Activated CD4-positive, alpha-beta T cell treated with anti-CD3 and anti-CD28 coated beads for 36 hours (primary cell): ENCODE measurements at regions of chr19 and their contacts with region 1.

Region 1: DNA sequence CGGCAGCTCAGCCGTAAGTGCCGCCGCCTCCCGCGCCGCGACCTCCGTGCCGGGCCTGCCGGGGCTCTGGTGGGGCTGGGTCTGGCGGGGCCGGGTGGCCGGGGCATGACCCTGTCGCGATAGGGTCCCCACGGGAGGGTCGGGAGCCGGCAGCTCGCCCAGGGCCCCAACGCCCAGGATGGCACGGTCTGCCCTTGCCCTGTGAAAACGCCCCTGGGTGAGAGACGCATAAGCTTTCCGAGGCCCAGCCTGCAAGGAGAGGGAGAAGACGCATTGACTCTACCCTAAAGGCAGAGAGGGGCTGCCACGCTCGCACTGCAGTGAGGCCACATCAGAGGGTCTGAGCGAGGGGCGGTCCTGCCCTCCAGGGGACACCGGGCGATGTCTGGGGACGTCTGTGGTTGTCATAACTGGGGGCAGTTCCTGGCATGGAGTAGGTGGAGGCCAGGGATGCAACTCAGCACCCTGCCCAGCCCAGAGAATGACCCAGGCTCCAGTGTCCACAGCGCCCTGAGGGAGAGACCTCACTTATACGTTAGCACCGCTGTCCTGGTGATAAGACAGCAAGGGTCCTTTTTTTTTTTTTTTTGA is 539 bp downstream of the ZNF554 start:
- DNase-seq: peak; percentile 31
- ATAC-seq: no peak
- H3K4me3 Mint-ChIP-seq: peak overlapping the region; percentile 78
- H3K27ac Mint-ChIP-seq: peak overlapping the region; percentile 31
- H3K4me1 Mint-ChIP-seq: peaks cover 12% of the 10 kb centered on the region
- H3K27me3 Mint-ChIP-seq: no peaks in the 10 kb centered on the region

Region 2: DNA sequence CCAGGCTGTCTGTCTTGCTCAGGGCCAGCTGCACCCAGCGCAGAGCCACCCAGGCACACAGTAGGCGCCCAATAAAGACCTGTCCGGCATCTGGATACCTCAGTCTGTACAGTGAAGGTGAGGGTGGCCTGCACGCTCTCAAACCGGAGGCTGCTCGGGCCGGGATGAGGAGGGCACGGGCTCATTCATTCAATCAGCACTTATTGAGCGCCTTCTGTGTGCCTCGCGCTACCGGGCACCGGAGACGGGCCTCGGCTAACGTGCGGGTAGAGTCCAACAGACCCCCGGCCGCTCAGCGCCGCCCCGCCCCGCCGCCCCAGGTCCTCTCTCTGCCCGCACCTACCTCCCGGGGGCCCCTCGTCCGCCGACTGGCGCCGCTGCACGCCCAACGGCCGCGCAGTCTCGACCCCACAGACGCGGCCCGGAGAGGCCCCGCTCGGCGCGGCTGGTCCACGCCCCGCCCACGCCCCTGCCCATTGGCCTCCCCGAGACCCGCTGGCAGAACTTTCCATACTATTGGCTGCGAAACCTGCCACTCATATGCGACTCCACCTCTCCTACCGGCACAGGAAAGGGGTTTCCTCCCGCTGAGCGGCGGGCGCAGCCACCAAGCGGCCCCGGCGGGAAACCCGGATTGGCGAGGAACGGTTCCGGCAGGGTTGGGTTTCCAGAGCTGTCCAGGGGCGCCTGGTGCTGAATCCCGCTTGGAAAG is 80.4 kb before region 1 on chr19 and contains the start of gene SLC39A3:
- CTCF ChIA-PET with region 1: no interaction called
- POLR2A ChIA-PET with region 1: no interaction called
- intact Hi-C with region 1: loop called in 1 of 2 experiments (anchors 1 kb)
- DNase-seq: peak; percentile 99
- ATAC-seq: peak; percentile 100
- H3K4me3 Mint-ChIP-seq: peak within 1 kb of the TSS; percentile 95
- H3K27ac Mint-ChIP-seq: peak within 1 kb of the TSS; percentile 70
- H3K4me1 Mint-ChIP-seq: peaks cover 14% of the 10 kb centered on the region
- H3K27me3 Mint-ChIP-seq: peaks cover 8% of the 10 kb centered on the region
- total RNA-seq, gene SLC39A3: 26.6 to 46.0 TPM

Region 3: DNA sequence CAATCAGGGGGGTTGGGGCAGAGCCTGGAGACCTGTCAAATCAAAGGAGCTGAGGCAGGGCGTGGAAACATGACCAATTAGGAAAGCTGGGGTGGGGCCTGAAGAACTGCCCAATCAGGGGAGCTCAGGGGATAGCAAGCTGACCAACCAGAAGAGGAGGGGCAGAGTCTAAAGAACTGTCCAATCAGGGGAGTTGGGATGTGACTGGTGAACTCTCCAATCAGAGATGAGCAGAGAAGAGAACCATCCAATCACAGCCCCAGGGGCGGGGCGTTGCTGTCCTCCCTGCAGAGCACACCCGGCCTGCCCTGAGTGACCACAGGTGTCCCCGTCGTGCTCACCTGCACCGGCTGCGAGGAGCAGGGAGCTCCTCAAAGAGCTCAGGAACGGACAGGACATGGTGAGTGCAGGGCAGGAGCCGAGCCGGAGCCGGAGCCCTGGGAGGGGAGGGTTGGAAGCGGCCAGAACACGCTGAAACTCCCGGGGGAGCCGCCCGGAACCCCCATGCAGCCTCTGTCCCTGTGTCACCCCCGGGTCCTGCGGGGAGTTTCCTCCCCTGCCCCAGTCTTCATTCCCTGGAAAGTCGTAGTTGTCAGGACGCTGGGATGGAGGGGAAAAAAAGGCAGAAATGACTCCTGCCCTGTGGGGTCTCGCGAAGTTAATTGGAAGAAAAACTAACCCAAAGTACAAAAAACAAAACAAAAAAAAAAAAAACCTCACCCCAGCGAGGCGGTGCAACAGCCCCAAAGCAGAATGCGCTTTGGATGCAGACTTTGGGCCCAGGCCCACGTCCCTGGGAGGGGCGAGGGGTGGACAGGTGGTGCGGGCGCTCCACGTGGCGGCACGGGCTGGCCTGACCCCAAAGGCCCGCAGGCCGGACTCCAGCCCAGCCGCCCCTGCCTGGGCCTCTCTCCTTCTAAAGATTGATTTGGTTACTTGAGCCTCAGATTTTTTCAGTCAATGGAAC is 47.1 kb after region 1 on chr19 and contains the start of gene ZNF556:
- CTCF ChIA-PET with region 1: no interaction called
- POLR2A ChIA-PET with region 1: no interaction called
- intact Hi-C with region 1: loop called in 1 of 2 experiments (anchors 5 kb)
- DNase-seq: peak; percentile 34
- ATAC-seq: peak; percentile 73
- H3K4me3 Mint-ChIP-seq: no peak within 1 kb of the TSS
- H3K27ac Mint-ChIP-seq: no peak within 1 kb of the TSS
- H3K4me1 Mint-ChIP-seq: no peaks in the 10 kb centered on the region
- H3K27me3 Mint-ChIP-seq: peaks cover 5% of the 10 kb centered on the region
- total RNA-seq, gene ZNF556: not detected